Activated CD4-positive, alpha-beta memory T cell treated with anti-CD3 and anti-CD28 coated beads, Interleukin-2, amount 10 ng/mL, durations not matched to agents 7 days and 5 days (primary cell): ENCODE measurements at regions of chr3 and their contacts with region 1.

Region 1: GRCh38 chr3:124905849-124906248 is 18.7 kb upstream of the ITGB5 start:
- DNase-seq: no peak
- H3K4me3 Mint-ChIP-seq: no peak overlapping the region
- H3K27ac Mint-ChIP-seq: no peak overlapping the region
- H3K4me1 Mint-ChIP-seq: peaks cover 5% of the 10 kb centered on the region
- H3K27me3 Mint-ChIP-seq: peaks cover 27% of the 10 kb centered on the region

Region 2: DNA sequence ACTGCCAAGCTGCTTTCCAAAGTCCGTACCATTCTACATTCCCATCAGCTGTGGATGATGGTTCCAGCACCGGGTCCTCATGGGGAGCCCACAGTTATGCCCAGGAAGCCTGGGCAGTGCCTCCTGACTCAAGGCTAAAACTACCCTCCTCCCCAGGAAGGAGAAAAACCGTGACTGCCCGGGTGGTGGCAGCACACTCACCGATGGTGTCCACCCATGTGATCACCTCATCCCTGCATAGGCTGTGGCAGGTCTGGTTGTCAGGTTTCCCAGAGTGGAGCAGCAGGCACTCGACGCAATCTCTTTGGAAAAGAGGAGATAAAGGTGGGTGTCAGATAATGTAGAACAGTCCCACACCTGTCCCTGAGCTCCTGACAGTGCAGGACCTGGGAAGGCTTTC is 137.0 kb before region 1 on chr3:
- CTCF ChIA-PET with region 1: interaction called, 168 read pairs
- POLR2A ChIA-PET with region 1: no interaction called
- DNase-seq: no peak
- H3K4me3 Mint-ChIP-seq: no peak overlapping the region
- H3K27ac Mint-ChIP-seq: no peak overlapping the region
- H3K4me1 Mint-ChIP-seq: no peaks in the 10 kb centered on the region
- H3K27me3 Mint-ChIP-seq: peaks cover 14% of the 10 kb centered on the region

Region 3: GRCh38 chr3:124786441-124787241 is 119.2 kb before region 1 on chr3:
- CTCF ChIA-PET with region 1: interaction called, 23 read pairs
- POLR2A ChIA-PET with region 1: no interaction called
- DNase-seq: no peak
- H3K4me3 Mint-ChIP-seq: no peak overlapping the region
- H3K27ac Mint-ChIP-seq: no peak overlapping the region
- H3K4me1 Mint-ChIP-seq: peaks cover 14% of the 10 kb centered on the region
- H3K27me3 Mint-ChIP-seq: no peaks in the 10 kb centered on the region

Region 4: GRCh38 chr3:124890282-124891190 is 15.3 kb before region 1 on chr3:
- CTCF ChIA-PET with region 1: interaction called, 20 read pairs
- POLR2A ChIA-PET with region 1: interaction called, 3 read pairs
- DNase-seq: no peak
- H3K4me3 Mint-ChIP-seq: no peak overlapping the region
- H3K27ac Mint-ChIP-seq: no peak overlapping the region
- H3K4me1 Mint-ChIP-seq: peaks cover 8% of the 10 kb centered on the region
- H3K27me3 Mint-ChIP-seq: peaks cover 29% of the 10 kb centered on the region

Region 5: GRCh38 chr3:124928333-124929202 is 22.7 kb after region 1 on chr3:
- CTCF ChIA-PET with region 1: interaction called, 13 read pairs
- POLR2A ChIA-PET with region 1: no interaction called
- DNase-seq: peak; percentile 69
- H3K4me3 Mint-ChIP-seq: no peak overlapping the region
- H3K27ac Mint-ChIP-seq: no peak overlapping the region
- H3K4me1 Mint-ChIP-seq: peaks cover 6% of the 10 kb centered on the region
- H3K27me3 Mint-ChIP-seq: peaks cover 45% of the 10 kb centered on the region